Head of caudate nucleus (tissue), 42 donors: ENCODE measurements at regions of chr2 and their contacts with region 1.

Region 1: DNA sequence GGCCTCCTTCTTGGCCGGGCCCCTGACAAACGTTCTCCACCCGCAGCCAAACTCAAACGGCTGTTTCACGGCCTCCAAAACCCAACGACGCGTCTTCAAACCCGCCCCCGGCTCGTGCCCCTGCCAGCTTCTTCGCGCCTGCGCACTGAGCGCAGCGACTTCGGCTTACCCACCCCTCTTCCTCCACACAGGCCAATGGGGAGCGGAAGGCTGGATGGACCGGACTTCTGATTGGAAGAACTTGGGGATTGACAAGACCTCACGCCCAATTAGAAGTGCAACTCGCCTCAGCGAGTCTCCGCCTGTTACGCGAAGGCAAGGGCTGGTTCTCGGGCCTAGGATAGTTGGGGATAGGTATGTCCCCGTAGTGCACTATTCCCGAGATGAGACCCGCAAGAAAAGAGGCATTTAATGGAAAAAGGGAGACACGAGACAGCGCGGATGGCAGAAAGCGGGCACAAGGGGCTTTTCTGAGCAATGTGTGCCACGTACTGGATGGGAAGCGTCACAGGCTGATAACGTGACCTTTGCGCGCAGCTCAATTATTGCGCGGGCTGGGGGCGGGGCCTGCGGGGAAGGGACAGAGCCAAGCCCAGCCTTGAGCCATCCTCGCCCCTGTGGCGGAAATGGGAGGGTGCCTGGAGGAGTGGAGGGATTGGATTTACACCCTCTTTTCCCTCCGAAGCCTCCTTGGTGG is at the start of gene LAPTM4A:
- DNase-seq: peak; percentile 95 to 99 (median 98)

Region 2: DNA sequence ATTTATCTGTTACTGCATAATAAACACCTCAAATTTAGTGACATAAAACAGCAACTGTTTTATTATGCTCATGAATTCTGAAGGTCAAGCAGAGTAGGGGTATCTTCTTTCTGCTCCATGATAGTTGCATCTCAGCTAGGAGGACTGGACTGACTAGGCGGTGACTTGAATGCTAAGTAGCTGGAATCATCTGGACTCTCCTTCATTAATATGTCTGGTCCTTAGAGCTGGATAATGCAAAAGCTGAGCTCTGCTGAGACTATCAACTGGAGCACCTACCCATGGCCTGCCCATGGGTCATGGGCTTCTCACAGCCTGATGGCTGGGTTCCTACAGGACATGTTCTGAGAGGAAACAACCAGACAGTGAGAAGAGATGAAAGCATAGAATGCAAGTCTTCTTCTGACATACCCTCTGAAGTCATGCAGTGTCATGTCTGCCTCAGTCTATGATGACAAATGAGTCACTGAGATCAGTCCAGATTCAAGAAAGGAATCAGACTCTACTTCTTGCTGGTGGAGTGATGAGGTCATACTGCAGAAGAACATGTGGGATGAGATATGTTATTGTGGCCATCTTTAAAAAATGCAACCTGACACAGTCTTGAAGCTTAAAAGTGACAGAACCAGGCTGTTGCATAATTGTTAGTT is 519.0 kb before region 1 on chr2:
- intact Hi-C with region 1: no loop called
- DNase-seq: no peak

Region 3: GRCh38 chr2:19901442-19902215 is 150.1 kb before region 1 on chr2 and contains the start of gene TTC32:
- intact Hi-C with region 1: loop called (anchors 10 kb)
- DNase-seq: peak; percentile 88 to 97 (median 94)

Region 4: GRCh38 chr2:19989681-19990415 is 61.8 kb before region 1 on chr2 and contains the start of gene WDR35:
- intact Hi-C with region 1: loop called (anchors 2 kb)
- DNase-seq: peak; percentile 76 to 96 (median 91)

Region 5: DNA sequence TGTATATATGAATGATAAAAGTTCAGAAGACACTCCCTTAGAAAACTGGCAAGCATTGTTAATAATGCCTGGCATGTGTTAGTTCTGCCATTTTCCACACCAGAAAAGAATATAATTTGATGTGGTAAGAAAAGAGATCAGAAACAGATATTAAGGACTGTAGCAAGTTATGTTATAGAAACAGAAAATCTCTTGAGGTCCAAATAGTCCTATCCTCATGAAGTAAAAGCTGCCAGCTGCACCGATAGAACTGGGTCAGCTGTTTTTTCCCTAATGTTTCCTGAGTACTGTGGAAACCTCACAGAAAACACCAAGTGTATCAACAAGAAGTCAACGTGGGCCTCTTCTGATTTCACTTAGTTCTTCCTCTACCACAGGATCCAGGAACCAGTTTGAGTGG is 230.2 kb after region 1 on chr2:
- intact Hi-C with region 1: no loop called
- DNase-seq: no peak